Transverse colon (tissue), 4 donors: ENCODE measurements at regions of chr9 and their contacts with region 1.

Region 1: GRCh38 chr9:95510709-95511615 is 5.8 kb downstream of the PTCH1 start:
- DNase-seq: peak; percentile 92
- H3K4me3 ChIP-seq: peak overlapping the region; percentile 58 to 97 (median 86)
- H3K27ac ChIP-seq: peak overlapping the region; percentile 91 to 95 (median 93)
- H3K4me1 ChIP-seq: peaks cover 6 to 27% (median 23%) of the 10 kb centered on the region in 4 donors
- H3K27me3 ChIP-seq: peaks cover 17% of the 10 kb centered on the region
- CTCF ChIP-seq: no peak
- EP300 ChIP-seq: no peak
- POLR2A ChIP-seq: peak; percentile 31

Region 2: DNA sequence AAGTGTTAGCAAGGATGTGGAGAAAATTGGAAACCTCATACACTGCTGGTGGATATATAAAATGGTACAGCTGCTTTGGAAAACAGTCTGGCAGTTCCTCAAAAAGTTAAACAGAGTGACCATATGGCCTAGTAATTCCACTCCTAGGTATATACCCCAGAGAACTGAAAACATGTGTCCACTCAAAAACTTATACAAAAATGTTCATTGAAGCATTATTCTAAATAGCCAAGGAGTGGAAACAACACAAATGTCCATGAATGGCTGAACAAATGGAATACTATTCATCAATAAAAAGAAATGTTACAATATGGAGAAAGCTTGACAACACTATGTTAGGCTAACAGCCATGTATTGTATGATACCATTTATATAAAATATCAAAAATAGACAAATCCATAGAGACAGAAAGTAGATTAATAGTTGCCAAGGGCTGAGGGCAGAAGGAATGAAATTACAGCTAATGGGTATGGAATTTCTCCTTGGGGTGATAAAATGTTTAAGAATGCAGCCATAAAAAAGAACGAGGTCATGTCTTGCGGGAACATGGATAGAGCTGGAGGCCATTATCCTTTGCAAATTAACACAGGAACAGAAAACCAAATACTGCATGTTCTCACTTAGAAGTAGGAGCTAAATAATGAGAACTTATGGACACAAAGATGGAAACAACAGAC is 838.0 kb before region 1 on chr9:
- in situ Hi-C with region 1: no loop called
- intact Hi-C with region 1: loop called (anchors 5 kb)
- DNase-seq: no peak
- H3K4me3 ChIP-seq: no peak overlapping the region
- H3K27ac ChIP-seq: no peak overlapping the region
- H3K4me1 ChIP-seq: peaks cover 0 to 12% (median 4%) of the 10 kb centered on the region in 4 donors
- H3K27me3 ChIP-seq: no peaks in the 10 kb centered on the region
- CTCF ChIP-seq: no peak
- EP300 ChIP-seq: no peak
- POLR2A ChIP-seq: no peak

Region 3: GRCh38 chr9:95317119-95317892 is 193.7 kb before region 1 on chr9 and contains the start of gene FANCC:
- in situ Hi-C with region 1: loop called in 1 of 4 experiments (anchors 25 kb)
- intact Hi-C with region 1: loop called (anchors 10 kb)
- DNase-seq: peak; percentile 94
- H3K4me3 ChIP-seq: peak within 1 kb of the TSS; percentile 68 to 99 (median 90)
- H3K27ac ChIP-seq: peak within 1 kb of the TSS; percentile 94 to 99 (median 96)
- H3K4me1 ChIP-seq: peaks cover 5 to 18% (median 11%) of the 10 kb centered on the region in 4 donors
- H3K27me3 ChIP-seq: no peaks in the 10 kb centered on the region
- CTCF ChIP-seq: no peak
- EP300 ChIP-seq: no peak
- POLR2A ChIP-seq: peak; percentile 48
- total RNA-seq, gene FANCC: 4.0 to 10.3 (median 9.5) TPM

Region 4: DNA sequence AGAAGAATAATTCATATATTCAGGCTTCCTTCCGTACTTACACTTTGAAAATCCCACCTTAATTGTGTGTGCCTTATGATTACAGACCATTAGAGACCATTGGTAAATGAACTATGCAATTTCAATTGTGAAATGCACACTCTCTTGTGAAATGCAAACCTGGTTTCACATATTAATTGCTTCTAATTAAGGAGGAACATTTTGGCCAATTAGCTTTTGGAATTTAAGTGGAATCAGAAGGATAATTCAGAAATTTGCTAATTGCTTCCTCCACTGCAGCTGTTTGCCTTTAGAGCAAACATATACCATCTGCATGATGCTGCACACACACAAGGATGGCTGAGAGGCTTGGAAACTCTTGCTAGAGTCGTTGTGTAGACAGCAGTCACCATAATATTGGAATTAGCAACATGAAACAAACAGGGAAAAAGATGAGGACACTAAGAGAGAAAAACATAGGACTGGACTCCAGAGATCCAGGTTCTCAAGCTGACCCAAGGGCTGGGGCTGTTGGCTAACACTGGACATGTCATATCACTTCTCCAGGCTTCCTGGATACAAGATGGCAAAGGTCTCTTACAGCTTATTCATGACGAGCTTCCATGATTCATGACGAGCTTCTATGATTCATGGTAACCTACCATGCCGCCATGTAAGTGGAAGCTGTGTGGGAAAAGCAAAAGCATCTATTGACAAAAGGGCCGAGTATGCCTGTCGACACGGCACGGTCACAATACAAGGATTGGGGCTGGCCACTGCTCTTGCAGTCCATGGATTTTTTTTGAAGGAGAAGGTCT is 72.2 kb before region 1 on chr9:
- in situ Hi-C with region 1: no loop called
- intact Hi-C with region 1: no loop called
- DNase-seq: no peak
- H3K4me3 ChIP-seq: no peak overlapping the region
- H3K27ac ChIP-seq: no peak overlapping the region
- H3K4me1 ChIP-seq: no peaks in the 10 kb centered on the region
- H3K27me3 ChIP-seq: no peaks in the 10 kb centered on the region
- CTCF ChIP-seq: no peak
- EP300 ChIP-seq: no peak
- POLR2A ChIP-seq: no peak

Region 5: GRCh38 chr9:95462249-95463147 is 48.5 kb before region 1 on chr9:
- in situ Hi-C with region 1: no loop called
- intact Hi-C with region 1: loop called (anchors 5 kb)
- DNase-seq: peak; percentile 84
- H3K4me3 ChIP-seq: peak overlapping the region in 2 of 4 donors; percentile 13 to 38
- H3K27ac ChIP-seq: peak overlapping the region; percentile 55 to 80 (median 72)
- H3K4me1 ChIP-seq: peaks cover 30 to 56% (median 35%) of the 10 kb centered on the region in 4 donors
- H3K27me3 ChIP-seq: no peaks in the 10 kb centered on the region
- CTCF ChIP-seq: no peak
- EP300 ChIP-seq: no peak
- POLR2A ChIP-seq: no peak

Region 6: DNA sequence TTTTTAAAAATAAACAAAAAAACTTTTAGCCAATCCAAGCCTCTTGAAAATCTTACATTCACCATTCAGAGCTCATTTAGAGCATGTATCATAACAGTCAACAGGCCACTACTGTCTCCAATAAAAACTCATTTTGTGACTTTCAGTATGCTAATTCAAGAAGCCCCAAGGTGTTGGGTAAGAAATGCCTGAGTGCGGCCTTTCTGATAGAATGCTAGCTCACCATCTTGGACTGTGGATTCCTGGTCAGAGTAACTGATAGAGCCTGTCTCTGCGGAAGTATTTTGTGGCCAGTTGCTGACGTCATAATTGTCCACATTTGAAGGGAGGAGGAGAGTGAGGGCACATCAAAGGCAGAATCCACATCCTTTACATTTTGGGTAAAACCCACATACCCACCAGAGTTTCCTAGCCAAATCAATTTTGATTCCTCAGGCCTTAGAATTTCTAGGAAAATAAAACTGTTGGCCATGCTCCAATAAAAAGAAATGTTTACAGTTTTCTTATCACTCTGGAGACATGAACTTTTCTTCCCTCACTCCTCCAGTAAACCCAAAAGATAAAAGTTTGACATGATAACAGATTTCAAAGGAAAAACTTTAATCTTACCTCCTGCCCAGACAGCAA is 323.4 kb after region 1 on chr9:
- in situ Hi-C with region 1: no loop called
- intact Hi-C with region 1: no loop called
- DNase-seq: no peak
- H3K4me3 ChIP-seq: no peak overlapping the region
- H3K27ac ChIP-seq: peak overlapping the region; percentile 5 to 54 (median 38)
- H3K4me1 ChIP-seq: peaks cover 3 to 19% (median 13%) of the 10 kb centered on the region in 4 donors
- H3K27me3 ChIP-seq: no peaks in the 10 kb centered on the region
- CTCF ChIP-seq: no peak
- EP300 ChIP-seq: no peak
- POLR2A ChIP-seq: no peak

Region 7: GRCh38 chr9:95875305-95876137 is 364.6 kb after region 1 on chr9 and contains the start of gene ERCC6L2:
- in situ Hi-C with region 1: loop called in 1 of 4 experiments (anchors 10 kb)
- intact Hi-C with region 1: no loop called
- DNase-seq: peak; percentile 96
- H3K4me3 ChIP-seq: peak within 1 kb of the TSS in 1 of 4 donors; percentile 89
- H3K27ac ChIP-seq: no peak within 1 kb of the TSS
- H3K4me1 ChIP-seq: peaks cover 0 to 25% (median 15%) of the 10 kb centered on the region in 4 donors
- H3K27me3 ChIP-seq: no peaks in the 10 kb centered on the region
- CTCF ChIP-seq: peak in 2 of 5 experiments; percentile 4 to 28
- EP300 ChIP-seq: no peak
- POLR2A ChIP-seq: peak; percentile 88
- total RNA-seq, gene ERCC6L2: 62.7 to 84.6 (median 77.3) TPM

Region 8: GRCh38 chr9:96217754-96218693 is 707.1 kb after region 1 on chr9:
- in situ Hi-C with region 1: no loop called
- intact Hi-C with region 1: loop called (anchors 5 kb)
- DNase-seq: peak; percentile 82
- H3K4me3 ChIP-seq: peak overlapping the region in 3 of 4 donors; percentile 22 to 51 (median 28)
- H3K27ac ChIP-seq: peak overlapping the region; percentile 50 to 77 (median 55)
- H3K4me1 ChIP-seq: peaks cover 0 to 20% (median 9%) of the 10 kb centered on the region in 4 donors
- H3K27me3 ChIP-seq: peaks cover 4% of the 10 kb centered on the region
- CTCF ChIP-seq: peak; percentile 90 to 99 (median 99)
- EP300 ChIP-seq: no peak
- POLR2A ChIP-seq: no peak